ENCODE measurements at regions of chr4 and their contacts with region 1.

Region 1: DNA sequence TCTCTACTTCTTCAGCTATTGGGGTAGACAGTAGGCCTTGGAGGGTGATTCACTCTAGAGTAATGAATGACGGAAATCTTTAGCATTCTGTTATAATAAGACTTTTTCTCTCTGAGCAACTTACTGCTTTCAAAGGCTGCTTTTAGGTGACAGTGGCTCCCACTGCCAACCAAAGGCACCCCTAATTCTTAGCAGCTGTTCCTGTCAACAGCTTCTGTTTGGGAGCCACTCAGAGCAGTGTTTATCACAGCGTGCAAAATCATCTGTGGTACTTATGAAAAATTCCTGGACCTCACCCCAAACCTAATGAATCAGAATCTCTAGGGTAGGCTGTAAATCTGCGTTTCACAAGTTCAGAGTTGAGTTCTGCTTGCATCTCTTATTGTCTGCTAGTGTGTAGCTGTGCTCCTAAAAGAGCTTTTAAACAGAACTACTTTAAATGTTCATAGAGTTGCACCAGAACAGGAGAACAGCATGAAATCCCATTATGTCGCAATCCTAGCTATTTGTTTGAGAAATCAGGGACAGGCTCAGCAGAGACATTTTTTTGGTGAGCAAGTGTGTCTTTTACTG is 52.8 kb upstream of the POU4F2 start:
- DNase-seq: peak; percentile 92
- H3K4me3 ChIP-seq: no peak overlapping the region
- H3K27ac ChIP-seq: peak overlapping the region; percentile 71
- H3K4me1 ChIP-seq: peaks cover 30% of the 10 kb centered on the region
- H3K27me3 ChIP-seq: no peaks in the 10 kb centered on the region
- CTCF ChIP-seq: no peak

Region 2: GRCh38 chr4:145446184-145446583 is 1139.7 kb before region 1 on chr4:
- CTCF ChIA-PET with region 1: no interaction called
- POLR2A ChIA-PET with region 1: interaction called, 13 read pairs
- intact Hi-C with region 1: no loop called
- DNase-seq: no peak
- H3K4me3 ChIP-seq: no peak overlapping the region
- H3K27ac ChIP-seq: no peak overlapping the region
- H3K4me1 ChIP-seq: no peaks in the 10 kb centered on the region
- H3K27me3 ChIP-seq: no peaks in the 10 kb centered on the region
- CTCF ChIP-seq: no peak

Region 3: DNA sequence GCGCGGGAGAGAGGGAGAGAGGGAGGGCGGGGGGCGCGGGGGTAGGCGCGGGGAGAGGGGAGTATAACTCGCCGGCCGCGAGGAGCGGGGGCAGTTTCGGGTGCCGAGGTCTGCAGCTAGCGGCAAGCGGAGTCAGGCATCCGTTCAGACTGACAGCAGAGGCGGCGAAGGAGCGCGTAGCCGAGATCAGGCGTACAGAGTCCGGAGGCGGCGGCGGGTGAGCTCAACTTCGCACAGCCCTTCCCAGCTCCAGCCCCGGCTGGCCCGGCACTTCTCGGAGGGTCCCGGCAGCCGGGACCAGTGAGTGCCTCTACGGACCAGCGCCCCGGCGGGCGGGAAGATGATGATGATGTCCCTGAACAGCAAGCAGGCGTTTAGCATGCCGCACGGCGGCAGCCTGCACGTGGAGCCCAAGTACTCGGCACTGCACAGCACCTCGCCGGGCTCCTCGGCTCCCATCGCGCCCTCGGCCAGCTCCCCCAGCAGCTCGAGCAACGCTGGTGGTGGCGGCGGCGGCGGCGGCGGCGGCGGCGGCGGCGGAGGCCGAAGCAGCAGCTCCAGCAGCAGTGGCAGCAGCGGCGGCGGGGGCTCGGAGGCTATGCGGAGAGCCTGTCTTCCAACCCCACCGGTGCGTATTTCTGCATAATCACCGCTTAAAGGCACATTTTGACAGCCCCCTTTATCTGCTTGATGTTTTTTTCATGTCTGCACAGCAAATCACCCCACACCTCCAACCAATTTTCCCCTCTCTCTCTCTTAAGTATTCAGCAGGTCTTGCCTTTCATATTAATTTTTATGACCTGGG is 53.2 kb after region 1 on chr4 and contains the start of gene POU4F2:
- CTCF ChIA-PET with region 1: no interaction called
- POLR2A ChIA-PET with region 1: no interaction called
- intact Hi-C with region 1: loop called (anchors 2 kb)
- DNase-seq: peak; percentile 85
- H3K4me3 ChIP-seq: peak within 1 kb of the TSS; percentile 61
- H3K27ac ChIP-seq: no peak within 1 kb of the TSS
- H3K4me1 ChIP-seq: peaks cover 10% of the 10 kb centered on the region
- H3K27me3 ChIP-seq: peaks cover 38% of the 10 kb centered on the region
- CTCF ChIP-seq: no peak
- total RNA-seq, gene POU4F2: 2.6 and 4.6 TPM in 2 replicates

Region 4: DNA sequence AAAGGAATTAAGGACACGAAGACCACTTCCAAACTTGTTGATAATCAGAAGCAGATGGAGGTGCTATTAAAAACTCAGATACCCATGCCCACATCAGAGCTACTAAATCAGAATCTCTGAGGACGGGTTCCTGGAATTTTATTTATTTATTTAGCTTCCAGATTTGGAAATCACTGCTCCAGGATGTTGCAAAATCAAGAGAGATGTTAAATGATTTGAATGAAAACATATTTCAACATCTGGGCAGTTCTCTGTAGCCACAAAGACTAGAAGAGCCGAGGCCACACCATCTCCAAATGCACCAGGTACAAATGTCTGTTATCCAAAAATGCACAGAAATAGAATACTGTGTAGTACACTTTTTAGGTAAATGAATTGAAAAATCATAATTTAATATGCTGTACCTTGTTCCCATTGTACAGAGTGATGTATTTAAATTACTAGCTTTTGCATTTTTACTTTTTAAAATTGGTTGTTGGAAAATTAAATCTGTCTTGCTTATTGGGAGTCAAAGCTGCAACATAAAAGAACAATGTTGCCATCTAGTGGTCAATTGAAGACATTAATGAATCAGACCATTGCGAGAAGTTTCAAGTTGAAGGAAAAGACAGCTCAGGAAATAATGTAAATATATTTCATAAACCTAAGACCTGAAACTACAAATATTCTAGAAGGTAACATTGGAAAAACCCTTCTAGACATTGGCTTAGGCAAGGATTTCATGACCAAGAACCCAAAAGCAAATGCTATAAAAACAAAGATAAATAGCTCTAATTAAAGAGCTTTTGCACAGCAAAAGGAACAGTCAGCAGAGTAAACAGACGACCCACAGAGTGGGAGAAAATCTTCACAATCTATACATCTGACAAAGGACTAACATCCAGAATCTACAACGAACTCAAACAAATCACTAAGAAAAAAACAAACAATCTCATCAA is 511.1 kb after region 1 on chr4:
- CTCF ChIA-PET with region 1: no interaction called
- POLR2A ChIA-PET with region 1: no interaction called
- intact Hi-C with region 1: loop called (anchors 10 kb)
- DNase-seq: peak; percentile 71
- H3K4me3 ChIP-seq: no peak overlapping the region
- H3K27ac ChIP-seq: no peak overlapping the region
- H3K4me1 ChIP-seq: no peaks in the 10 kb centered on the region
- H3K27me3 ChIP-seq: no peaks in the 10 kb centered on the region
- CTCF ChIP-seq: peak; percentile 72

Measured in A673 (cell line).